Right ventricle myocardium inferior (tissue), 1 donor: ENCODE measurements at regions of chr4 and their contacts with region 1.

Region 1: GRCh38 chr4:22444813-22445212 is 71.1 kb downstream of the ADGRA3 start:
- DNase-seq: no peak
- ATAC-seq: no peak

Region 2: DNA sequence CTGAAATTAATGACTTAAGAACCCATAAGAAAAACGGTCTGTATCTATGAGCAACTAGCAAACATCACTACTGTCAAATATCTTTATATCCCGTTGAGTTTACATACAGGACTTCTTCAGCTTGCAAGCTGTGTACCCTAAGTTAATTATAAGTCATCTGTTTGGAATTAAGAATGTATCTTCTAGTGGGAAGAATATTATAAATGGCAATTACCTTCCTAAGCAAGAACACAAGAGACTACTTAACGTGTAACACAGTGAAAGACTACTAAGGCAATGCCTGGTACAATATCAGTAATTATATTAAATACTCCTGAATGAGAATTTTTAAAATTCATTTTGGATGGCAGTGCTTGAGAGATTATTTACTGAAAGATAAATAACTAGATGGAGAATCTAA is 12.5 kb after region 1 on chr4:
- intact Hi-C with region 1: loop called (anchors 1 kb)
- DNase-seq: no peak
- ATAC-seq: no peak

Region 3: DNA sequence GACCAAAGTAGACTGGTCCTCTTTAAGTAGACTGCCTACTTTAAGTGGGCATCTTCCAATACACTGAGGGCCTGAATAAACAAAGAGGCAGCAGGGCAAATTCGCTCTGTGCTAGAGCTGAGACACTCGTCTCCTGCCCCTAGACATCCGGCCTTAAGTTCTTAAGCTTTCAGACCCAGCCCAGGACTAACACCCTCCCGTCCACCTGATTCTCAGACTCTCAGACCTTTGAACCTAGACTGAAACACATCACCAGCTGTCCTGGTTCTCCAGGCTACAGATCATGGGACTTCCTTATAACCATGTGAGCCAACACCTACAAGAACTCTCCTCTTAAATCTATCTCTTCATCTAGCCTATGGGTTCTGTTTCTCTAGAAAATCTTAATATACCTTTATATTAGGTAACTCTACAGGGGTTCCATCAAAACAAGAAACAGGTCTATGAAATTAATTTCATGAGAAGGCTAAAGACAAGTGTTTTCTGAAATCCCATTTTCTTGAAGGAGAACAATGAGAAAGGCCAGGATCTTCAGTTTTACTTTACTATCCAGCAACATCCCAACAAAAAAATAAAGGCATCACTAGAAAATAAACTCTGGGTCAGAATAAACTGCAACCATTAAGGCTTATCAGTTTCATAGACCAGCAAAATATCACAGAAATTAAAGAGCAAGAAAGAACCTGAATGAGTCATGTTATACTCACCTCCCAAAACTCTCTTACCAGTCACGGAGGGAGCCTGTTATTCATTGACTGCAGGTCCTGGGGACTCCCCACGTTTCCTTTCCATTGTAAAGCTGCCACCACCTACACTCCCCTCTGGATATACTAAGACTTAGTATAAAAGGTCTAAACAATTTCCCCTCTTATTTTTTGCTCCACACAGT is 56.3 kb after region 1 on chr4:
- intact Hi-C with region 1: no loop called
- DNase-seq: no peak
- ATAC-seq: no peak

Region 4: GRCh38 chr4:22515145-22515887 is 70.5 kb after region 1 on chr4:
- intact Hi-C with region 1: loop called (anchors 5 kb)
- DNase-seq: peak; percentile 80
- ATAC-seq: peak; percentile 65

Region 5: GRCh38 chr4:23114538-23114937 is 669.7 kb after region 1 on chr4:
- intact Hi-C with region 1: no loop called
- DNase-seq: no peak
- ATAC-seq: no peak